ENCODE measurements at regions of chr3 and their contacts with region 1.

Region 1: GRCh38 chr3:9249273-9250192 is at the start of gene SRGAP3:
- DNase-seq: peak; percentile 84 to 88
- ATAC-seq: peak; percentile 82 to 87 (median 84)
- H3K4me3 ChIP-seq: peak within 1 kb of the TSS; percentile 64
- H3K27ac ChIP-seq: peak within 1 kb of the TSS; percentile 82
- H3K4me1 ChIP-seq: peaks cover 37% of the 10 kb centered on the region
- H3K27me3 ChIP-seq: no peaks in the 10 kb centered on the region
- CTCF ChIP-seq: peak; percentile 34
- total RNA-seq, gene SRGAP3: 1.6 to 7.6 (median 3.2) TPM

Region 2: GRCh38 chr3:9142362-9142761 is 107.2 kb before region 1 on chr3:
- intact Hi-C with region 1: loop called in 1 of 2 experiments (anchors 5 kb)
- DNase-seq: no peak
- ATAC-seq: peak; percentile 80 to 96 (median 86)
- H3K4me3 ChIP-seq: peak overlapping the region; percentile 26
- H3K27ac ChIP-seq: peak overlapping the region; percentile 14
- H3K4me1 ChIP-seq: peaks cover 16% of the 10 kb centered on the region
- H3K27me3 ChIP-seq: peaks cover 0 to 4% (median 0%) of the 10 kb centered on the region in 3 donors
- CTCF ChIP-seq: no peak

Region 3: GRCh38 chr3:9153904-9154619 is 95.5 kb before region 1 on chr3:
- intact Hi-C with region 1: loop called in 1 of 2 experiments (anchors 5 kb)
- DNase-seq: peak; percentile 86 to 90
- ATAC-seq: peak; percentile 81 to 90 (median 88)
- H3K4me3 ChIP-seq: peak overlapping the region; percentile 29
- H3K27ac ChIP-seq: peak overlapping the region; percentile 51
- H3K4me1 ChIP-seq: peaks cover 11% of the 10 kb centered on the region
- H3K27me3 ChIP-seq: no peaks in the 10 kb centered on the region
- CTCF ChIP-seq: no peak

Region 4: DNA sequence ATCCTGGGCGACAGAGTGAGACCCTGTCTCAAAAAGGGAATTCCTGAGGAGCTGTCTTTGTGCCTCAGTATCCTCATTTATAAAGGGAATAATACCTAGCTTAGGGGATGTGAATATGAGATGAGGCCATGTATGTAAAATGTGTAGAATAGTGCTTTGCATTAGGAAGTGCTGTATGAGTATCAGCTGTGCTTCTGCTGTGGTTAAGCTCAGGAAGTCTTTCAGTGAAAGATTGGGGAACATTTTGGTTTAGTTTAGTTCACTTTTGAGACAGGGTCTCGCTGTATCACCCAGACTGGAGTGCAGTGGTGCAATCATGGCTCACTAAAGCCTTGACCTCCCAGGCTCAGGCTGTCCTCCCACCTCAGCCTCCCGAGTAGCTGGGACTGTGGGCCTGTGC is 123.9 kb after region 1 on chr3:
- intact Hi-C with region 1: no loop called
- DNase-seq: no peak
- ATAC-seq: no peak
- H3K4me3 ChIP-seq: no peak overlapping the region
- H3K27ac ChIP-seq: no peak overlapping the region
- H3K4me1 ChIP-seq: no peaks in the 10 kb centered on the region
- H3K27me3 ChIP-seq: no peaks in the 10 kb centered on the region
- CTCF ChIP-seq: no peak

Measured in psoas muscle (tissue), 8 donors.